Endothelial cell of umbilical vein (primary cell): ENCODE measurements at regions of chr4 and their contacts with region 1.

Region 1: DNA sequence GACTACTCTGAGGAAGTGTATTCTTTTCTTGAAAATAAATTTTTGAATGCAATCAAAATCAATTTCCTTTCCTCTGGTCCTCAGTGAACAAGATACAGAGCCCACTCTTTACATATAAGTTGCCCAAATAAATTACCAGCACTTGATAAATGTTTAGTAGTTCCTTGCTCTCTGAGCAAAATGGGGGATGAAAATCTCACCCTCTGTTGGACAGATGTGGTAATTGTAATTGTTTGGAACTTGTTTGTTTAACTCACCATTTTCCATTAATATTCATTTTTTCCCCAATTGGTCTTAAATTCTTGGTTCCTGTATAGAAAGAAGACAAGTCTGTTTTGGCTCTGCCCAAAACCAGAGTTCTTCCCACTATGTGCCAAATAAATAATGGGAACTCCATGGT is 146.3 kb downstream of the LDB2 start:
- DNase-seq: peak; percentile 42
- H3K4me3 ChIP-seq: no peak overlapping the region
- H3K27ac ChIP-seq: no peak overlapping the region
- H3K4me1 ChIP-seq: peaks cover 3% of the 10 kb centered on the region
- H3K27me3 ChIP-seq: no peaks in the 10 kb centered on the region
- CTCF ChIP-seq: peak in 1 of 2 donors; percentile 18
- POLR2A ChIP-seq: no peak

Region 2: GRCh38 chr4:16289897-16290554 is 462.1 kb before region 1 on chr4:
- CTCF ChIA-PET with region 1: no interaction called
- POLR2A ChIA-PET with region 1: no interaction called
- dilution Hi-C with region 1: no loop called
- intact Hi-C with region 1: loop called (anchors 2 kb)
- DNase-seq: peak; percentile 69
- H3K4me3 ChIP-seq: no peak overlapping the region
- H3K27ac ChIP-seq: no peak overlapping the region
- H3K4me1 ChIP-seq: no peaks in the 10 kb centered on the region
- H3K27me3 ChIP-seq: peaks cover 12 to 18% of the 10 kb centered on the region in 2 experiments
- CTCF ChIP-seq: peak; percentile 27 to 41
- POLR2A ChIP-seq: no peak

Region 3: GRCh38 chr4:16505726-16506125 is 246.4 kb before region 1 on chr4:
- CTCF ChIA-PET with region 1: no interaction called
- POLR2A ChIA-PET with region 1: no interaction called
- dilution Hi-C with region 1: no loop called
- intact Hi-C with region 1: loop called (anchors 2 kb)
- DNase-seq: no peak
- H3K4me3 ChIP-seq: no peak overlapping the region
- H3K27ac ChIP-seq: no peak overlapping the region
- H3K4me1 ChIP-seq: no peaks in the 10 kb centered on the region
- H3K27me3 ChIP-seq: no peaks in the 10 kb centered on the region
- CTCF ChIP-seq: peak; percentile 16 to 39
- POLR2A ChIP-seq: no peak

Region 4: DNA sequence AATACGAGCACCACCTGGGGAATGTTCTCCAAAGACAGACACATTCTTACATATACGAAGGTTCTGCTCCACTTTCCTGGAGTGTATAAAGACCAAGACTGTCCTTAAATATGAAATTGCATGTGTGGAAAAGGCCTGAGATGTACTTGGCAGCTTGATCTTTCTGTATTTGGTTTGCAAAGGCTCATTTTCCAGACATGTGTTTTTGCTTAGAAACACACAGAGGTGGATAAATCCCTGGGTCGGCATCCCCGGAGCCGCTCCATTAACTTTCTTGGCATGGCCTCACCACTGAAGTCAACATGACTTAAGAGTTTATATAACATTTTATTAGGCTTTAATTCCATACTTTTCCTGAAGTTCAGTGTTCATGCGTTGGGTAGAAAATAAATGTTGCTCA is 93.1 kb before region 1 on chr4:
- CTCF ChIA-PET with region 1: no interaction called
- POLR2A ChIA-PET with region 1: no interaction called
- dilution Hi-C with region 1: no loop called
- intact Hi-C with region 1: no loop called
- DNase-seq: no peak
- H3K4me3 ChIP-seq: no peak overlapping the region
- H3K27ac ChIP-seq: no peak overlapping the region
- H3K4me1 ChIP-seq: no peaks in the 10 kb centered on the region
- H3K27me3 ChIP-seq: no peaks in the 10 kb centered on the region
- CTCF ChIP-seq: no peak
- POLR2A ChIP-seq: no peak